B cell (primary cell): ENCODE measurements at regions of chr2 and their contacts with region 1.

Region 1: GRCh38 chr2:73828818-73829570 is at the start of gene STAMBP:
- DNase-seq: peak; percentile 94
- ATAC-seq: peak; percentile 94
- H3K4me3 ChIP-seq: peak within 1 kb of the TSS; percentile 69 to 92 (median 78)
- H3K4me3 Mint-ChIP-seq: peak within 1 kb of the TSS; percentile 95
- H3K27ac ChIP-seq: peak within 1 kb of the TSS; percentile 78 to 91
- H3K27ac Mint-ChIP-seq: peak within 1 kb of the TSS; percentile 96
- H3K4me1 ChIP-seq: peaks cover 19% of the 10 kb centered on the region in 2 donors
- H3K4me1 Mint-ChIP-seq: peaks cover 40% of the 10 kb centered on the region
- H3K27me3 ChIP-seq: no peaks in the 10 kb centered on the region
- H3K27me3 Mint-ChIP-seq: no peaks in the 10 kb centered on the region
- CTCF ChIP-seq: no peak
- total RNA-seq, gene STAMBP: 32.5 and 35.8 TPM in 2 replicates

Region 2: DNA sequence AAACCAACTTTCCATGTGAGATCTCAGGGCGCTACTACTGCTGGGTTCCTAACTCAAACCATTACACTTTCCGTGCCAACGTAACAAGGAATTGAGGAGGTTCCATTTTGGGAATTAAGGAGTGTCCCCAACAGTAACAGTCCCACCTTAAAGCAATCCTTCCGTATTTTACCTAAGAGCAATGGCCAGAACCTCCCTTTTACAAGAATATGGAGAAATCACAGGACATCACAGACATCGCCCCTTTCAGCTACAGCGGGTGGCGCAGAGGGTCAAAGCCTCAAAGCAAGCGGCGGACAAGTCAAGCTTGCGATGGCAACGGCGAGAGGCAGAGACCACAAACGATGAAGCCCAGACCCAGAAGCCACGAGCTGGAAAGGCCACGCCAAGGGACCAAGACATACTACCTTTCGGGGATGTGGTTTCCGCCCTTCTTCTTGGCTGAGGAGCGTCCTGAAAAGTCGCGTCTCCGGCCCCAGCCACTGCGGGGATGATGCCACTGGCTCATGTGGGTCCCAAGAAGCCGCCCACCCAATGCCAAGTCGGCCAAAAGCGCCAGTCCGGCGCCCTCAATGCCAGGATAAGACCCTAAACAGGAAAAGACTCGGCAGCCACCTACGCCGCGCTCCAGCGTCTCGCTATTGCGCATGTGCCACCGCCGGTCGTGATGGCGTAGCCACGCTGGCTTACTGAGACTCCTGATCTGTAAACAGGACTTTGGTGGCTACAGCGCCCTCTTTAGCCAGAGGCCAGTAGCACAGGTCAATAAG is 49.3 kb before region 1 on chr2 and contains the start of gene DUSP11:
- CTCF ChIA-PET with region 1: interaction called, 4 read pairs
- POLR2A ChIA-PET with region 1: no interaction called
- intact Hi-C with region 1: loop called (anchors 1 kb)
- DNase-seq: peak; percentile 98
- ATAC-seq: peak; percentile 100
- H3K4me3 ChIP-seq: peak within 1 kb of the TSS; percentile 64 to 95 (median 91)
- H3K4me3 Mint-ChIP-seq: peak within 1 kb of the TSS; percentile 100
- H3K27ac ChIP-seq: peak within 1 kb of the TSS; percentile 72 to 94
- H3K27ac Mint-ChIP-seq: peak within 1 kb of the TSS; percentile 99
- H3K4me1 ChIP-seq: peaks cover 11 to 18% of the 10 kb centered on the region in 2 donors
- H3K4me1 Mint-ChIP-seq: peaks cover 22% of the 10 kb centered on the region
- H3K27me3 ChIP-seq: no peaks in the 10 kb centered on the region
- H3K27me3 Mint-ChIP-seq: peaks cover 10% of the 10 kb centered on the region
- CTCF ChIP-seq: peak; percentile 95
- total RNA-seq, gene DUSP11: 42.2 and 43.0 TPM in 2 replicates

Region 3: DNA sequence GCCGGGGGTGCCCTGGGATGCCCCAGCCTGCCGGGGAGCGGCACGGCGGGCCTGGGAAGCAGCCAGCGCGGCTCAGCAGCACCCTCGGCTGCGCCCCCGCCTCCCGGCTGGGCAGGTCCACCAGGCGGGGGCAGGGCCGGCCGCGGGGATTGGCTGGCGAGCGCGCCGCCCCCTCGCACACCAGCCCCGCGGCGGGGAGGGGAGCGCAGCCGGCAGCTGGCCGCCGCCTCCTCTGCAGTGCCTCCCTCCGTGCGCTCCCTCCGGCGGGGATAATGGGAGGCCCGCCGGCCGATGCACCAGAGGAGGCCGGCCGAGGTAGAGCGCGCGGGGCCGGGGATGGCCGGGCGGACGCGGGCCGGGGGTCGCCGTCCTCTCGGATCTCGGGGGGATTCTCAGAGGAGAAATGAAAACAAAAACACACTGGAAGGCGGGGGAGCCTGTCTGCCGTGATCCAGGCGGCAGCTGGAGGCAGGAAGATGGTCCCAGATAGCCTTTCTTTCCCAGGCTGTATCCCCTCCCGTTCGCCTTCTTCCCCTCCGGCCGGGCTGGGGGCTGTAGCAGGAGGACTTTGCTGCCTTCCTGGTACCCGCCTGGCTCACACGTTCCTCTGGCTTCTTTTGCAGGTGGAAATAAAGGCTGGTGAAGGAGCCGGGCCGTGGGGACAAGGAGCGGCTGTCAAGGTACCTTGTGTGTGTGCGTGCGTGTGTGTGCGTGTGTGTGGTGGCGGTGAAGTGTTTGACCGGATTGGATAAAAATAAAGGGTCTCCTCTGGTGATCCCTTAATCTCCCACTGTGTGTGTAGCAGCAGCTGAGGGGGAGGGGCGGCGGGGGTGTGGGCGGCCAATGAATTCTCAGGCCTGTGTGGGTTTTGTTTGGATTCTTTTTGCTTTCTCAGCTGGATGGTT is 173.7 kb after region 1 on chr2:
- CTCF ChIA-PET with region 1: interaction called, 5 read pairs
- POLR2A ChIA-PET with region 1: no interaction called
- intact Hi-C with region 1: loop called (anchors 1 kb)
- DNase-seq: peak; percentile 86
- ATAC-seq: peak; percentile 98
- H3K4me3 ChIP-seq: peak overlapping the region in 4 of 5 experiments; percentile 35 to 60 (median 52)
- H3K4me3 Mint-ChIP-seq: peak overlapping the region; percentile 87
- H3K27ac ChIP-seq: no peak overlapping the region
- H3K27ac Mint-ChIP-seq: peak overlapping the region; percentile 53
- H3K4me1 ChIP-seq: peaks cover 15 to 29% of the 10 kb centered on the region in 2 donors
- H3K4me1 Mint-ChIP-seq: peaks cover 66% of the 10 kb centered on the region
- H3K27me3 ChIP-seq: no peaks in the 10 kb centered on the region
- H3K27me3 Mint-ChIP-seq: no peaks in the 10 kb centered on the region
- CTCF ChIP-seq: no peak

Region 4: DNA sequence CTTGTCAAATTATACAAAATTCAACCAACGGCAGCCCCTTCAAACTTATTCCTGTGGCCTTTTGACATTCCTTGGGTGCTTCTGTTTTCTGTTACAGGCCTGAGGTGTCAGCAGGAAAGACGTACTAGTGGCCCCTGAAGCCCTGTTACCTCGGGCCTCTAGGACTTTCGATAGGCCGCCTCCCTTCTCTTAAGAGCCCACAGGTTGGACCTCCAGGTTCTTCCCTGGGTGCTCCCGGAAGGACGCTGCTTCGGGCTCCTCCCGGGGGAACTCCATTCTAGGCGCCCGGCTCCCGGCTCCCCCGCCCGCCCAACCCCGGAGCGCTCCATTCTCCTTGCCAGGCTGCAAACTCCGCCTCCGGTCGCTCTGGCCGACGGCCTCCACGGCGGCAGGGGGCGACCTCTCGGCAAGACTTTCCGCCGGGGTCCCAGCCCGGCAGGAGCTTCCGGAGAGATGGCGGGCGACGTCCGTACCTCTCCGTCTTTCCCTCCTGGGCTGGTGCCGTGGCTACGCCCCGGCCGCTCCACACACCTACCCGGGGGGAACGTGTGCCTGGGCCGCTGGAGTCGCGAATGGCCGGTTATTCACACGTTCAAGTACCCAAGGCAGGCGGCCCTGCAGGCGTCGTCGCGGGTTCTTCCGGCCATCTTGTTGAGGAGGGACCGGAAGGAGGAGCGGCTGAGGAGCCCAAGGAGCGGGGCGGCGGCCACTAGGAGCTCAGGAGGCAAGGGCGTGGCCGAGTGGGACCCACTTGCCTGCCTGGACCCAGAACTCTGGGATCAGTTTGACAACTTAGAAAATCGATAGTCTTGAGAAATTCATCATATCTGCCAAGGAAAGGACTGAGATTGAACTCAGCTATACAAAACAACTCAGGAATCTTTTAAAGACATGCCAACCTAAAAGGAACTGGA is 291.2 kb after region 1 on chr2:
- CTCF ChIA-PET with region 1: interaction called, 9 read pairs
- POLR2A ChIA-PET with region 1: interaction called, 3 read pairs
- intact Hi-C with region 1: loop called (anchors 1 kb)
- DNase-seq: peak; percentile 91
- ATAC-seq: peak; percentile 96
- H3K4me3 ChIP-seq: peak overlapping the region; percentile 55 to 93 (median 88)
- H3K4me3 Mint-ChIP-seq: peak overlapping the region; percentile 91
- H3K27ac ChIP-seq: peak overlapping the region; percentile 85 to 88
- H3K27ac Mint-ChIP-seq: peak overlapping the region; percentile 94
- H3K4me1 ChIP-seq: peaks cover 0 to 11% of the 10 kb centered on the region in 2 donors
- H3K4me1 Mint-ChIP-seq: peaks cover 8% of the 10 kb centered on the region
- H3K27me3 ChIP-seq: peaks cover 0 to 2% (median 0%) of the 10 kb centered on the region in 4 experiments
- H3K27me3 Mint-ChIP-seq: peaks cover 2% of the 10 kb centered on the region
- CTCF ChIP-seq: peak; percentile 69

Region 5: DNA sequence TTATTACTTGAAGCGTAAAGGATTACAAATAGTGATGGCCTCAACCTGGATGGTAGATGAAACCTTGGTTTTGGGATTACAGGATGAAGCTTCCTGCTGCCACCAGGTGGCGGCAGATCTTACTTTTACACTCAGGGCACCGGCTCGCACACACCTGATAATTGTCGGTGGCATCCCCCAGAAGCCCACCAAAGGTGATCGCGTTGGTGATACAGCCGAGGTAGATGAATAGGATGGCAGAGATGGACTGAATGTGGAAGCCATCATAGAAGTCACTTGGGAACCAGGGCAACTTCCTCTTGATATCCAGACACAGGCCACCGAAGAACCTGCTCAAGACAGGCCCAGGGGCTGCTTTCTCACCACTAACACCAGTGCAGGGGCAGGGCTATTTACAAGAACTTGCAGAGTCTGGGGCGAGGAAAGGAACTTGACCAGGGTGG is 421.2 kb after region 1 on chr2:
- CTCF ChIA-PET with region 1: interaction called, 13 read pairs
- POLR2A ChIA-PET with region 1: no interaction called
- intact Hi-C with region 1: no loop called
- DNase-seq: peak; percentile 72
- ATAC-seq: peak; percentile 51
- H3K4me3 ChIP-seq: no peak overlapping the region
- H3K4me3 Mint-ChIP-seq: no peak overlapping the region
- H3K27ac ChIP-seq: no peak overlapping the region
- H3K27ac Mint-ChIP-seq: no peak overlapping the region
- H3K4me1 ChIP-seq: no peaks in the 10 kb centered on the region
- H3K4me1 Mint-ChIP-seq: peaks cover 6% of the 10 kb centered on the region
- H3K27me3 ChIP-seq: no peaks in the 10 kb centered on the region
- H3K27me3 Mint-ChIP-seq: no peaks in the 10 kb centered on the region
- CTCF ChIP-seq: peak; percentile 90

Region 6: DNA sequence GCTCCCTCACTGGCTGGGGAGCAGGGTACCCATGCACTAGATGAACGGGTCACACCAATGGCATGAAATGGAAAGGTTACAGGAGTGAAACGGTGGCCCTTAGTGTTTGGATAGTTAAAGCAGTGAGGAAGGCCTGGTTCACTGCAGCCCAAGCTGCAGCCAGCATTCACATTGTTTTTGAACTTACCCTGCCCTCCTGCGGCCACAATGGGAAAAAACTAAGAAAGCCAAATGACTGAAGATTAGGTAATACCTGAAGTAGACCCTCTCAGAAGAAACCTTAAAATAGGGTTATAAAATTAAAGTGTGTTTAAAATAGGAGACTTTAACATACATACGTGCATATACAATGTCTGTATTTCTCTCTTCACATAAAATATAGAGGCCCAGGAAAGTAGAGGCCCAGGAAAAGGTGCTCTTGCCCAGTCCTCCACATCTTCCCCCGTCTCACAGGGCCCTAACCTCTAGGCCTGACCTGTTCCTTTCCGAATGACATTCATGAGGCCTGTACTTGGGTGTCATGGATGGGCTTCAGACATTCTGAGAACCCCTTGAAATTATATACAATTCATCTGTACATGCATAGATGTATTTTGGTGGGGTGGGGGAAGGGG is 758.8 kb after region 1 on chr2:
- CTCF ChIA-PET with region 1: interaction called, 7 read pairs
- POLR2A ChIA-PET with region 1: no interaction called
- intact Hi-C with region 1: loop called (anchors 1 kb)
- DNase-seq: peak; percentile 83
- ATAC-seq: peak; percentile 92
- H3K4me3 ChIP-seq: no peak overlapping the region
- H3K4me3 Mint-ChIP-seq: no peak overlapping the region
- H3K27ac ChIP-seq: no peak overlapping the region
- H3K27ac Mint-ChIP-seq: no peak overlapping the region
- H3K4me1 ChIP-seq: peaks cover 0 to 6% of the 10 kb centered on the region in 2 donors
- H3K4me1 Mint-ChIP-seq: peaks cover 9% of the 10 kb centered on the region
- H3K27me3 ChIP-seq: peaks cover 0 to 5% (median 5%) of the 10 kb centered on the region in 4 experiments
- H3K27me3 Mint-ChIP-seq: peaks cover 22% of the 10 kb centered on the region
- CTCF ChIP-seq: peak; percentile 80